Activated T-helper 2 cell treated with anti-CD3 and anti-CD28 coated beads, Interferon-gamma antibody, Interleukin-2, Interleukin-4, amounts not matched to agents 10 μg/mL and 5 μg/mL and 100 μg/mL, durations not matched to agents 14 hours and 24 hours and 36 hours (primary cell): ENCODE measurements at regions of chr19 and their contacts with region 1.

Region 1: GRCh38 chr19:46600384-46601317 is 479 bp upstream of the CALM3 start:
- DNase-seq: peak; percentile 96
- H3K4me3 Mint-ChIP-seq: peak overlapping the region; percentile 93
- H3K27ac Mint-ChIP-seq: peak overlapping the region; percentile 100
- H3K4me1 Mint-ChIP-seq: peaks cover 18% of the 10 kb centered on the region
- H3K27me3 Mint-ChIP-seq: peaks cover 5% of the 10 kb centered on the region

Region 2: DNA sequence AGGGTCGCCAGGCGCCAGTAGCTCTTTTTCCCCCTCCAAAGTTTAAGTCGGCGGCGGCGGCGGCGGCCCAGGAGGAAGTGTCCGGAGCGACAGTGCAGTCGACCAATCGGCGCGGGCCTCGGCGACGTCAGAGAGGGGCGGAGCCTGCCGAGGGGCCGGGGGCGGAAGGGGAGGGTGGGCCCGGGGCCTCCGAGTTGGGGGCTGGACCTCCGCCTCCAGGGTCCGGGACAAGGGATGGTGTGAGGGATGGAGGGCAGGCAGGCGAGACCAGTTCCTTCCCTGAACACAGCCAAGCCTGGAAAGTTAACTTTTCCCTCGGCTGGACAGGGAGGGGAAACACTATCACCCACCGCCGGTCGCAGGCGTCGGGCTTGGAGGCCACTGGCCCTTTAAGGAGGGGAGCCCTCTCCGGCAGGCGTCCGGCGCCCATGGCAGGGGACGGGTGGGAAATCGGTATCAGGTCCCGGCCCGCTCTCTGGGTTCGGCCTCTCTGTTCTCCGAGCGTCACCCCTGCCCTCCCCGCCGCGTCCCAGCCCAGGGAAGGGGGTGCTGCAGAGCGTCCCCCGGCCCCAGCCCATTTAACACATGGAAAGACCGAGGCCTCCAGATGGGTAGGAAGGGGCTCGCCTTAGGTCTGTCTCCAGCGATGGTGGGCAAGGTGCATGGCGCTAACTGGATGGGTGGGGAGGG is 116.5 kb after region 1 on chr19 and contains the start of gene PRKD2:
- intact Hi-C with region 1: loop called (anchors 2 kb)
- DNase-seq: peak; percentile 84
- H3K4me3 Mint-ChIP-seq: peak within 1 kb of the TSS; percentile 94
- H3K27ac Mint-ChIP-seq: peak within 1 kb of the TSS; percentile 92
- H3K4me1 Mint-ChIP-seq: peaks cover 39% of the 10 kb centered on the region
- H3K27me3 Mint-ChIP-seq: no peaks in the 10 kb centered on the region
- total RNA-seq, gene PRKD2: 77.9 and 79.8 TPM in 2 replicates

Region 3: DNA sequence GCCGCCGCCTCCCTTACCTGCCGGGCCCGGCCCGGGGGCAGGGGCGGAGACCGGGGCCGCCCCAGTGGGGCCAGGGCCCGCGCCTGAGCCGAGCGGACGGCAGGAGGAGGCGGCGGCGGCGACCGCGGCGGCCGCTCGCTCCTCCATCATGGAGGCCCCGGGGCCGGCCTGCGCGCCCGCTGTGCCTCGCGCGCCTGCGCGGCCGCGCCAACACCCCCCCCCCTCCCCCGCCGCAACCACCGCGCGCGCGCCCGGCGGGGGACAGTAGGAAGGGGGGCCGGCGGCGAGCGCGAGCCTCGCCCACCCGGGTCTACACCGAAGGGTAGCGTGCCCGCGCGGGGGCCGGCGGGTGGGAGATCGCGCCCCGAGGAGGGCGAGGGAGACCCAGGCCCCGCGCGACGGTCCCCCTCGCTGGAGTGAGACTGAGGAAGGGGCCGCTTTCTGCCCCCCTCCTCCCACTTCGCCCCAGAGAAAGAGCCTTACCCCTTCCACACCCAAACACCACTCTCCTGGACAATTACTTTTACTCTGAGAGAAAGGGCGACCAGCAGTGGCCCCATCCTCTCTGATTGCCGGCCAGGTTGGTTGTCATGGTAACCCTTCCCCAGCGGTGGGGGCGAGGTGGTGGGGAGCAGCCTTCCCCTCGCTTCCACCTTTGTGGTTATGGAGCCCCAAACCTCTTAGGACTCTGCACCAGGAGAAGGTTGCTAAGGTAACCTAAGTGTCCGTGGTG is 145.8 kb after region 1 on chr19 and contains the start of gene STRN4:
- intact Hi-C with region 1: loop called (anchors 2 kb)
- DNase-seq: peak; percentile 38
- H3K4me3 Mint-ChIP-seq: peak within 1 kb of the TSS; percentile 95
- H3K27ac Mint-ChIP-seq: peak within 1 kb of the TSS; percentile 83
- H3K4me1 Mint-ChIP-seq: peaks cover 32% of the 10 kb centered on the region
- H3K27me3 Mint-ChIP-seq: no peaks in the 10 kb centered on the region
- total RNA-seq, gene STRN4: 96.2 and 97.7 TPM in 2 replicates